Common myeloid progenitor, CD34-positive (primary cell): ENCODE measurements at regions of chr5 and their contacts with region 1.

Region 1: GRCh38 chr5:179668391-179668790 is 12.4 kb downstream of the CBY3 start:
- DNase-seq: peak; percentile 69 to 80 (median 73)
- H3K4me3 ChIP-seq: no peak overlapping the region
- H3K27ac ChIP-seq: no peak overlapping the region
- H3K4me1 ChIP-seq: peaks cover 0 to 4% (median 0%) of the 10 kb centered on the region in 4 experiments
- H3K27me3 ChIP-seq: no peaks in the 10 kb centered on the region

Region 2: DNA sequence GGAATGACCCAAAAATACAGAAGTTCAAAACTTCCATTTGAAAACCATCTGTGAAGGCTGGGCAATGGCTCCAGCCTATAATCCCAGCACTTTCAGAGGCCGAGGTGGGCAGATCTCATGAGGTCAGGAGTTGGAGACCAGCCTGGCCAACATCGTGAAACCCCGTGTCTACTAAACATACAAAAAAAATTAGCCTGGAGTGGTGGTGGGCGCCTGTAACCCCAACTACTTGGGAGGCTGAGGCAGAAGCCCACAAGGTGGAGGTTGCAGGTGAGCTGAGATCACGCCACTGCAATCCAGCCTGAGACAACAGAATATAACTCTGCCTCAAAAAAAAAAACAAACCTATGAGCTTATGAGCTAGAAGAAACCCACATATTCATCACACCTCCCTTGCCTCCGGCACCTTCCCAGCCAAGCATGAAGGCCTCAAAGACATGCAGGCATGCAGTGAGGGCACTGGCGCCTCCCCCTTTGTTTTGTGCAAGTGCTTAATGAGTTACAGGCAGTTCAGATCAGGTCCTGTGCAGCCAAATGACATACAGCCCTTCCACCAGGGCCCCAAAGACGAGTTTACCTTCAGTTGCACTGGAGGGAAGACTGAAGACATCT is 54.8 kb before region 1 on chr5:
- CTCF ChIA-PET with region 1: interaction called, 10 read pairs
- POLR2A ChIA-PET with region 1: no interaction called
- DNase-seq: peak in 2 of 3 donors; percentile 44 to 53
- H3K4me3 ChIP-seq: no peak overlapping the region
- H3K27ac ChIP-seq: no peak overlapping the region
- H3K4me1 ChIP-seq: peaks cover 0 to 5% (median under 1%) of the 10 kb centered on the region in 4 experiments
- H3K27me3 ChIP-seq: no peaks in the 10 kb centered on the region

Region 3: GRCh38 chr5:179623003-179623880 is 45.1 kb before region 1 on chr5 and contains the start of gene HNRNPH1:
- CTCF ChIA-PET with region 1: interaction called, 11 read pairs
- POLR2A ChIA-PET with region 1: interaction called, 3 read pairs
- DNase-seq: peak; percentile 98 to 99 (median 98)
- H3K4me3 ChIP-seq: peak within 1 kb of the TSS; percentile 89 to 99 (median 95)
- H3K27ac ChIP-seq: peak within 1 kb of the TSS; percentile 90 to 97
- H3K4me1 ChIP-seq: peaks cover 31 to 51% (median 40%) of the 10 kb centered on the region in 4 experiments
- H3K27me3 ChIP-seq: no peaks in the 10 kb centered on the region

Region 4: DNA sequence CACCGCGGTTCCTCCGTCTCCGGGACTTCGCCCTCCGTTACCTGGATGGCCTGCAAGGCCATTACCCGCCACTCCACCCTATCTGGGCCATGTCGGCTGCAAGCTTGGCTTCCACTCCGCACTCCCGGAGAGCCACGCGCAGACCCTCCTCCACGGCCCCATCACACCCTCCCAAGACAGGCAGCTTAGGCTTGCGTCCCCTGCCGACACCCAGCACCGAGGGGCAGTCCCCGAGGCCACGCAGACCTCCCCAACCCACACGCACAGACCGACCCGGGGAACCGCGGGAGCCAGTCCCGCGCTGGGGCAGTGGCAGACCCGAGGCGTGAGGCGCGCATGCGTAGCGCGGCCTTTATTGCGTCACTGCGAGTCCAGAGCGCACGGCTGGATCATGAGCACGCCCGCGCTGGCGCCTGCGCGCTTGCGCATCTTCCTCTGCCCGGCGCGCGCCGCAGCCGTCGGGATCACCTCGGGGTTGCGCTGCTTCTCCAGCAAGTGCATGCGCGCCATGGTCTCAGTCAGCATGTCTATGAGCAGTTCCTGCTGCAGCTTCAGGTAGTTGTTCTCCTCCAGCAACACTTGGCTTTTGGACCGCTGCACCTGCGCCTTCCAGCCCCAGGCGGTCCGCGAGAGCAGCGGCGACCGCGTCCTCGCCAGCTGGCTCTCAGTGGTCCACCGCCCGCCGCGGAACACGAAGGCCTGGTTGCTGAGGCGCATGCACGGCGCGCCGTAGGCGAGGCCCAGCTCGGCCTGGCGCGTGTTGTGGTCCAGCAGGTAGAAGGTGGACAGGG is 10.0 kb after region 1 on chr5:
- CTCF ChIA-PET with region 1: interaction called, 41 read pairs
- POLR2A ChIA-PET with region 1: interaction called, 5 read pairs
- DNase-seq: peak; percentile 96 to 98 (median 97)
- H3K4me3 ChIP-seq: peak overlapping the region; percentile 48 to 98 (median 85)
- H3K27ac ChIP-seq: peak overlapping the region; percentile 68 to 87
- H3K4me1 ChIP-seq: peaks cover 0 to 34% (median 27%) of the 10 kb centered on the region in 4 experiments
- H3K27me3 ChIP-seq: no peaks in the 10 kb centered on the region